OCI-LY7 (cell line): ENCODE measurements at regions of chr5 and their contacts with region 1.

Region 1: DNA sequence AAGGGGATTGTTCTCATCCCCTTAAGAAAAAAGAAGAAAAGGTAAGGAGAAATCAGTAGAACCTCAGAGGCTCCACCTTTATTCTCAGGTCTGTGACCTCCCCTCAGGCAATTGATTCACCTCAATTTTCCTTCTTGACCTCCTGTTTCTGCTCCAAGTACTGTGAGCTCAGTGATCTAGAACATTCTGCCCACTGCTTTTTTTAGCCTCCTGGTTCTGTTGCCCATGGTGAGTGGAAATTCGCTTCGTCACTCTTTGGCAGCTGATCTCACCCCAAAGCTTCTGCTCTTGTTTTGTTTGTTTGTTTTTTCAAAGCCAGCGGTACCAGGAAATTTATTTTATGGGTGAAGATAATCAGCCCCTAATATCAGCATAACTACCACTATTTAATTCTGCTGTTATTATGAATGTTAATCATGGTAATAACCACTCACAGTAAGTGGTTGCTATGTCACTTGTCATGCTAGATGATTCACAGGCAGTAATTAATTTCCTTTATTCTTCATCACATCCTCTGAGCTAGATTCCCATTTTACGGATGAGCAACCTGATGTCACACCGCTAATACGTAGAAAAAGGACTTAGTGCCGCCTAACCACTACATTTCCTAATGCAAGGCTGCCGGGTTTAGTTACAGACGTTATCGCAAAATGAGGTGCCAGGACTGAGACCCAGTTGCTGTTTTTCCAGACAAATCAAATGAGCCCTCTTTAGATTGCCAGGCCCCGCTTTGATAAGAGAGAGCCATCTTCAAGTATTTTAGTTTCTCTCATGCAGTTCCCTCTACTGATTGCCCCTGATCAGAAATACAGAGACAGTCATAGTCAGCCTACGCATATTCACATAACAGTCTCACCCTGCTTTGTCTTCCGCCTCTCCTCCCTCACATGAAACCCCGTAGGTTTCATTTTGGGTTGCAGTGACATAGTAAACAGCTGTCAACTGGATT is 78.2 kb downstream of the CYFIP2 start:
- DNase-seq: no peak
- H3K4me3 ChIP-seq: no peak overlapping the region
- H3K27ac ChIP-seq: no peak overlapping the region
- H3K4me1 ChIP-seq: no peaks in the 10 kb centered on the region
- CTCF ChIP-seq: no peak

Region 2: DNA sequence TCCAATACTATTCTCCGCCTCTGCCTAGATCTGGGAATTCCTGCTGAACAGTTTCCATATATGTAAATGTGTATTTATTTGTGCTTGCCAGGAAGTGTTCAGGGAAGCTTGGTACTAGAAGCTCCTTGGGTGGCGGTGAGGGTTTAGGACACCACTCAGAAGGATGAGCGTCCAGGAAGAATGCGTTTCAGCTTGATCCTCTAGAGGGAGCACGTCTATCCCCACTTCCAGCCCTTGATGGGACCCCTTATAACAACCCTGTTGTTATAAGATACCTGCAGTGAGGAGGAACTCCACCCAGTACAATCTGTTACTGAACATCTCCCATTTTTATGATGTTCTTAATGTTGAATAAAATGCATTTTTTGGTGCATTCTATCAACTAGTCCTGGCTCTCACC is 10.7 kb after region 1 on chr5:
- CTCF ChIA-PET with region 1: no interaction called
- POLR2A ChIA-PET with region 1: interaction called, 3 read pairs
- intact Hi-C with region 1: loop called (anchors 1 kb)
- DNase-seq: peak; percentile 31
- H3K4me3 ChIP-seq: no peak overlapping the region
- H3K27ac ChIP-seq: no peak overlapping the region
- H3K4me1 ChIP-seq: no peaks in the 10 kb centered on the region
- CTCF ChIP-seq: peak; percentile 73

Region 3: GRCh38 chr5:157651623-157652549 is 307.8 kb after region 1 on chr5 and contains the start of gene SOX30:
- CTCF ChIA-PET with region 1: no interaction called
- POLR2A ChIA-PET with region 1: no interaction called
- intact Hi-C with region 1: no loop called
- DNase-seq: no peak
- H3K4me3 ChIP-seq: no peak within 1 kb of the TSS
- H3K27ac ChIP-seq: no peak within 1 kb of the TSS
- H3K4me1 ChIP-seq: no peaks in the 10 kb centered on the region
- CTCF ChIP-seq: no peak
- total RNA-seq, gene SOX30: 0.16 TPM in 1 of 2 replicates, not detected in the other